Panc1 (cell line): ENCODE measurements at regions of chr5 and their contacts with region 1.

Region 1: DNA sequence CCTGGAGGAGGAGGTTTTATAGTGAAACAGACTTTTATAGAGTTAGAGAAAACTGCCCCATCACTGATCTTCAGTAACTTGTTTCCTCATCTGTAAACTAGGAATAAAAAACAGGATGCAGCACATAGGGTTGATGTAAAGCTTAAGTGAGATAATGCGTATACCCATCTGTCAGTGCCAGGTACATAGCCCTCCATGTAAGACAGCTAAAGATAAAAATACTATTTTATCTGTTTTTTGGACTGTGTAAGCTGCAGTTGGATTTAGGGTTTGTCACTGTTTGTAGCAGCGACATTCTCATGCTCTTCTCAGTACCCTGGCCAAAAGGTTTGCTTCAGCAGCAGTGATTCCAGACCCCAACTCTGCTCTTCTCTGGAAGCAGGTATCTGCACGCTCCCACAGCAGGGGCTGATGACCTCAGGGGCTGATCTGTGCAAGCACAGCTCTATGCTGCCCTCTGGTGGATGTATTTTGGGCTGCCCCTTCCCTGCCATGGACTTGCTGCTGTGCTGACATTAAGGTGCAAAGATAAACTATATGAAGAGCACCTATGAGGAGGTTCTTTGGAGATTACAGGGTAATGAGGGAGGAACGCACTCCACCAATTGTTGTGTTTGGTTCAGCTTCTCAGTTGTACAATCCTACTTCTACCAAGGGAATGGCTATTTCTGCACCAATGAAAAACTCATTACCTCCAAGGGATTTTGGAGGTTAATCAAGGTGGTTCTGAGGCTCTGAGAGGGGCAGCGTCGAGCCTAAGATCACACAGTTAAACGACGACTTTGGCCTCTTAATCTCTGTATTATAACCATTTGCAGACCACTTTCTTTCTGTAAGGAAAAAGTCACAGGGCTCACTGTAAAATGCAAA is 13.1 kb downstream of the HMHB1 start:
- DNase-seq: peak; percentile 81
- ATAC-seq: peak; percentile 97
- H3K4me3 ChIP-seq: no peak overlapping the region
- H3K27ac ChIP-seq: no peak overlapping the region; the same call in 1 of the 2 replicates
- H3K4me1 ChIP-seq: 0 out of 2 replicates have a peak, but pooled peaks cover 4% of the 10 kb centered on the region
- H3K27me3 ChIP-seq: no peaks in the 10 kb centered on the region
- CTCF ChIP-seq: peak; percentile 91

Region 2: GRCh38 chr5:142922223-142922952 is 902.7 kb before region 1 on chr5:
- CTCF ChIA-PET with region 1: no interaction called
- POLR2A ChIA-PET with region 1: no interaction called
- in situ Hi-C with region 1: no loop called
- intact Hi-C with region 1: loop called (anchors 5 kb)
- DNase-seq: peak; percentile 35
- ATAC-seq: peak; percentile 75
- H3K4me3 ChIP-seq: no peak overlapping the region
- H3K27ac ChIP-seq: no peak overlapping the region
- H3K4me1 ChIP-seq: no peaks in the 10 kb centered on the region
- H3K27me3 ChIP-seq: no peaks in the 10 kb centered on the region
- CTCF ChIP-seq: peak; percentile 49; the same call in 1 of the 2 replicates

Region 3: DNA sequence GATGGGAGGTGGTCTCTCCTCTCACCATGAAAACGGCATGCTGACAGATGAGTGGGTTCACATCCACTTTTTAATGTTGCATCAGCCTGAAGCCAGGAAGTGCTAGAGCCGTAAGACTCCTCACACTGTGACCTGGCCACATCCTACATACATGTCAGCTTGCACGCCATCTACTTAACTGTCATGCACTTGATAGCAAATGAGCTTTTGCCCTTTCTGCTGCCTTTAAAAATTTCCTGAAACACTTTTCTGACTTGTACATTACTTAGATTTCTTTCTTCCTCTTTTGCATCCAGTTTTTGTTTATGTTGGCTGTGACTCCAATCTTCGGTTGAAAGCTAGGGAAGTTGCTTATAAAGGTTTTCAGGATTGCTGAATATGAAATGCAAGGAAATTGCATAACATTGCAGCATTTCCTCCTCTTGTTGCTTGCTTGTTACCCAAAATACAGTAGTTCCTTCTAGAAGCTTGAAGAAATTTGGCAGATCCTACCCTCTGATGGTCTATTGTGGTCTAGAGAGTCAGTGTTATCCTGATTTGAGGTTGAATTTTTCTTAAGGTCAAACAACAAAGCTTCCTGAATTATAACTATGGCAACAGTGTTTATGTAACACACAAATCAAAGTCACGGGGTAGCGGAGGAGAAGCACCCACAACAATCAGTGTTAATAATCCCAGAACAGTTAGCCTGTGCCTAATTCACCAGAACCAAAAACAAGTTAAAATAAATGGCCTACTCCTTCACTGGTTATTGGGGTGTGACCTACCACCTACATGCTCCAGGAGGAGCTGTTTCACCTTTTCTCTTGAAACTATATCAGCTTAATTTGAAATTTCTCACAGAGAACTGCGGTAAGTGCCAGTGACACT is 822.4 kb before region 1 on chr5:
- CTCF ChIA-PET with region 1: no interaction called
- POLR2A ChIA-PET with region 1: no interaction called
- in situ Hi-C with region 1: no loop called
- intact Hi-C with region 1: loop called (anchors 10 kb)
- DNase-seq: no peak
- ATAC-seq: no peak; the same call in 1 of the 2 replicates
- H3K4me3 ChIP-seq: no peak overlapping the region
- H3K27ac ChIP-seq: peak overlapping the region; percentile 72
- H3K4me1 ChIP-seq: peaks cover 10% of the 10 kb centered on the region
- H3K27me3 ChIP-seq: no peaks in the 10 kb centered on the region
- CTCF ChIP-seq: peak; percentile 66

Region 4: DNA sequence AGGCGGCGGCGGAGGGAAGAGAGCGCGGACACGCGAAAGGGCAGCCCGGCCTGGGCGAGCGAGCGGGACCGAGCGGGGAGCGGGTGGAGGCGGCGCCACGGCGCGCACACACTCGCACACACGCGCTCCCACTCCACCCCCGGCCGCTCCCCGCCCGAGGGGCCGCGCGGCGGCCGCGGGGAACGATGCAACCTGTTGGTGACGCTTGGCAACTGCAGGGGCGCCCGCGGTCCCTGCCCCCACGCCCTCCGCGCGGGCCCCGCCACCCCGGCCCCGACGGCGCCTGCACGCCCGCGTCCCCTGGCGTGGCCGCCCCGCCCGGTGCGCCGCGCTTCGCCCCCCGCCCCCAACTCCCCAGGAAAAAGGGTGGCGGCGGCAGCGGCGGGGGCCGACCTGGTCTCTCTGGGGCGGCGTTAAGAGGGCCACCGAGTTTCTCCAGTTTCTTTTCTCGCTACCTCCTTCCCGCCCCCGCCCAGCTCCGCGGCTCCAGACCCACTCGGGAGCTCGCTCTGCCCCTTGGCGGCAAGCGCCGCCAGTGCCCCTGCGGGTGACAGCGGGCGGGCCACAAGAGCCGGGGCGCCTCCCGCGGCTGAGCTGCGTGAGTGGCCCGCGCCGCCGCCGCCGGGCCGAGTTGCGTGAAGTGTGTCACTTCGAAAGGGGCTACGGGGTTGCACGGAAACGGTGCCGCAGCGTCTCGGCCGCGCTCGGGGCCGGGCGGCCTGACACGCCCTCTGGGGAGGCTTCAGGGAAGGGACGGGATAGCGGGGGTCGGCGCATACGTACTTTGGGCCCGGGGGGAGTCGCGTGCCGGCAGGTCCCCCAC is 421.3 kb before region 1 on chr5 and contains the start of gene NR3C1:
- CTCF ChIA-PET with region 1: no interaction called
- POLR2A ChIA-PET with region 1: interaction called, 3 read pairs
- in situ Hi-C with region 1: no loop called
- intact Hi-C with region 1: loop called (anchors 2 kb)
- DNase-seq: no peak
- ATAC-seq: peak; percentile 80
- H3K4me3 ChIP-seq: peak within 1 kb of the TSS; percentile 91
- H3K27ac ChIP-seq: peak within 1 kb of the TSS; percentile 100
- H3K4me1 ChIP-seq: peaks cover 20% of the 10 kb centered on the region
- H3K27me3 ChIP-seq: no peaks in the 10 kb centered on the region; the same call in 1 of the 2 replicates
- CTCF ChIP-seq: peak; percentile 89
- total RNA-seq, gene NR3C1: 52.6 TPM

Region 5: GRCh38 chr5:143536364-143536763 is 288.7 kb before region 1 on chr5:
- CTCF ChIA-PET with region 1: no interaction called
- POLR2A ChIA-PET with region 1: interaction called, 14 read pairs
- in situ Hi-C with region 1: no loop called
- intact Hi-C with region 1: no loop called
- DNase-seq: peak; percentile 10
- ATAC-seq: peak; percentile 83
- H3K4me3 ChIP-seq: no peak overlapping the region
- H3K27ac ChIP-seq: no peak overlapping the region
- H3K4me1 ChIP-seq: no peaks in the 10 kb centered on the region
- H3K27me3 ChIP-seq: no peaks in the 10 kb centered on the region
- CTCF ChIP-seq: no peak

Region 6: DNA sequence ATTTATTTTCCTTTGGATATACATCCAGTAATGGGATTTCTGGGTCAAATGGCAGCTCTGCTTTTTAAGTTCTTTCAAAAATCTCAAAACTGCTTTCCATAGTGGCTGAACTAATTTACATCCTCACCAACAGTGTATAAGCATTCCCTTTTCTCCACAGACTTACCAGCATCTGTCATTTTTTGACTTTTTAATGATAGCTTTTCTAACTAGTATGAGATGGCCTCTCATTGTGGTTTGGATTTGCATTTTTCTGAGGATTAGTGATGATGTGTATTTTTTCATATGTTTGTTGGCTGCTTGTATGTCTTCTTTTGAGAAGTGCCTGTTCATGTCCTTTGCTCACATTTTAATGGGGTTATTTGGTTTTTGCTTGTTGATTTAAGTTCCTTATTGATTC is 103.2 kb before region 1 on chr5:
- CTCF ChIA-PET with region 1: no interaction called
- POLR2A ChIA-PET with region 1: no interaction called
- in situ Hi-C with region 1: no loop called
- intact Hi-C with region 1: no loop called
- DNase-seq: no peak
- ATAC-seq: no peak
- H3K4me3 ChIP-seq: no peak overlapping the region
- H3K27ac ChIP-seq: no peak overlapping the region
- H3K4me1 ChIP-seq: no peaks in the 10 kb centered on the region
- H3K27me3 ChIP-seq: no peaks in the 10 kb centered on the region
- CTCF ChIP-seq: no peak

Region 7: GRCh38 chr5:143850050-143850683 is 25.1 kb after region 1 on chr5:
- CTCF ChIA-PET with region 1: no interaction called
- POLR2A ChIA-PET with region 1: interaction called, 18 read pairs
- in situ Hi-C with region 1: no loop called
- intact Hi-C with region 1: no loop called
- DNase-seq: no peak
- ATAC-seq: no peak
- H3K4me3 ChIP-seq: no peak overlapping the region
- H3K27ac ChIP-seq: no peak overlapping the region
- H3K4me1 ChIP-seq: no peaks in the 10 kb centered on the region
- H3K27me3 ChIP-seq: no peaks in the 10 kb centered on the region
- CTCF ChIP-seq: no peak

Region 8: GRCh38 chr5:144139586-144139985 is 314.5 kb after region 1 on chr5:
- CTCF ChIA-PET with region 1: no interaction called
- POLR2A ChIA-PET with region 1: no interaction called
- in situ Hi-C with region 1: no loop called
- intact Hi-C with region 1: loop called (anchors 10 kb)
- DNase-seq: no peak
- ATAC-seq: no peak
- H3K4me3 ChIP-seq: no peak overlapping the region
- H3K27ac ChIP-seq: no peak overlapping the region
- H3K4me1 ChIP-seq: no peaks in the 10 kb centered on the region
- H3K27me3 ChIP-seq: no peaks in the 10 kb centered on the region; the same call in none of the 2 replicates
- CTCF ChIP-seq: no peak